Aorta (tissue), 5 donors: ENCODE measurements at regions of chr10 and their contacts with region 1.

Region 1: GRCh38 chr10:101272229-101272868 is 43.1 kb upstream of the LBX1 start:
- DNase-seq: peak in 1 of 2 donors; percentile 67
- ATAC-seq: peak; percentile 63
- H3K4me3 ChIP-seq: no peak overlapping the region
- H3K27ac ChIP-seq: no peak overlapping the region
- H3K4me1 ChIP-seq: no peaks in the 10 kb centered on the region
- H3K27me3 ChIP-seq: no peaks in the 10 kb centered on the region

Region 2: DNA sequence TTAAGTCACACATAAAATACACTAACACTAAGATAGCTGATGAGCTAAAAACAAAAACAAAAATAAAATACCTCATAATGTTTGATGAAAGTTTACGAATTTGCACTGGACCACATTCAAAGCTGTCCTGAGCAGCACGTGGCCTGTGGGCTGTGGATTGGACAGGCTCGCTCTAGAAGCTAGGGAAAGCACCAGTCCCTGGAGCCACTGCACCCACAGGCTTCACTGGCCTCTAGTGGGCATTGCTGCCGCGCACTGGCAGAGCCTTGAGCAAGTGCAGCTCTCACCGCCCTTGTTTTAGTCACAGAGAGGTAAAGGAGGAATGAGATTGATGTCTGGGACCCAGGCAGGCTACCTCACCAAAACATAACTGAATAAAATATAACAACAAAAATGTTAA is 459.4 kb before region 1 on chr10:
- intact Hi-C with region 1: no loop called
- DNase-seq: peak in 1 of 2 donors; percentile 20
- ATAC-seq: no peak
- H3K4me3 ChIP-seq: no peak overlapping the region
- H3K27ac ChIP-seq: no peak overlapping the region
- H3K4me1 ChIP-seq: no peaks in the 10 kb centered on the region
- H3K27me3 ChIP-seq: no peaks in the 10 kb centered on the region

Region 3: DNA sequence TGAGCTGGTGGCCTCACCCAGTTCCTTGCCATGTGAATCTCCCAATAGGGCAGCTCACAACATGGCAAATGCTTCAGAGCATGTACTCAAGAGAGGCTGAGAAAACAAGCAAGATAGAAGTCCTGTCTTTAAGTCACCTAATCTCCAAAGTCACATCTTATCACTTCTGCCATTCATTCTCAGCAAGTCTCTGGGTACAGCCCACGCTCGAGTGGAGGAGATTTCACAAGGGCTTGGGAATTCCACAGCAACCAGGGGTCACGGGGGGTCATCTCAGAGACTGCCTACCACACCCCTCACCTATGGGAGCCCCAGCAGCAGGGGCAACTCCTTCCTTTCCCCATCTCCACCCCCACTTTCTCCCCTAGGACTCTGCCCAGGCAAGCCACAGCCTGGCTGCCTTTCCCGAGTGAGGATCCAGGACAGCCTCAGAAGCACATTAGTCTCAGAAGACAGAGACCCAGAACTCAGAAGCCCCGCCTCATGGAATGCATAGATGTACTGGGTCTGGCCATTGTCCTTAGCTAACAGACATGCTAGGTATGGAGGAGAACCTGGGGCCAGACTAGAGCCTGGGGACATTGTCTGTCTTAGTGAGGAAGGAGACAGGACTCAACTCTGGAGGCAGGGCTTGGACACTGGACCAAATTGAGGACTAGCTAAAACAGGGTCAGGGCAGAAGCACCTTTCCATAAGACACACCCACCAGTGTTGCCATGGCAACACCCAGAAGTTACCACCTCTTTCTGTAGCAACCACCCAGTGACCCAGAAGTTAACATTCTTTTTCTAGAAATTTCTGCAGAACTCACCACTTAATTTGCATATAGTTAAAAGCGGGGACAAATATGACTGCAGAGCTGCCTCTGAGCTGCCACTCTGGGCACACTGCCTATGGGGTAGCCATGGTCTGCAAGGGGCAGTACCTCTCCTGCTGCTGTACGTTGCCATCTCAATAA is 114.0 kb before region 1 on chr10:
- intact Hi-C with region 1: no loop called
- DNase-seq: no peak
- ATAC-seq: no peak
- H3K4me3 ChIP-seq: no peak overlapping the region
- H3K27ac ChIP-seq: no peak overlapping the region
- H3K4me1 ChIP-seq: no peaks in the 10 kb centered on the region
- H3K27me3 ChIP-seq: no peaks in the 10 kb centered on the region

Region 4: GRCh38 chr10:101441541-101442455 is 169.4 kb after region 1 on chr10:
- intact Hi-C with region 1: loop called in 1 of 2 experiments (anchors 10 kb)
- DNase-seq: no peak
- ATAC-seq: no peak
- H3K4me3 ChIP-seq: no peak overlapping the region
- H3K27ac ChIP-seq: no peak overlapping the region
- H3K4me1 ChIP-seq: peaks cover 0 to under 1% of the 10 kb centered on the region in 2 donors
- H3K27me3 ChIP-seq: no peaks in the 10 kb centered on the region

Region 5: GRCh38 chr10:101467286-101467770 is 195.0 kb after region 1 on chr10:
- intact Hi-C with region 1: loop called in 1 of 2 experiments (anchors 5 kb)
- DNase-seq: no peak
- ATAC-seq: peak; percentile 68
- H3K4me3 ChIP-seq: no peak overlapping the region
- H3K27ac ChIP-seq: no peak overlapping the region
- H3K4me1 ChIP-seq: no peaks in the 10 kb centered on the region
- H3K27me3 ChIP-seq: no peaks in the 10 kb centered on the region

Region 6: GRCh38 chr10:101569838-101570766 is 297.8 kb after region 1 on chr10:
- intact Hi-C with region 1: loop called (anchors 5 kb)
- DNase-seq: peak; percentile 86 to 95
- ATAC-seq: peak; percentile 94
- H3K4me3 ChIP-seq: no peak overlapping the region
- H3K27ac ChIP-seq: no peak overlapping the region
- H3K4me1 ChIP-seq: no peaks in the 10 kb centered on the region
- H3K27me3 ChIP-seq: no peaks in the 10 kb centered on the region